ENCODE measurements at regions of chr6 and their contacts with region 1.

Region 1: GRCh38 chr6:13487122-13488014 is at the start of gene GFOD1:
- DNase-seq: peak; percentile 50 to 93
- H3K4me3 ChIP-seq: peak within 1 kb of the TSS; percentile 90 to 94
- H3K27ac ChIP-seq: peak within 1 kb of the TSS; percentile 89 to 96
- H3K4me1 ChIP-seq: peaks cover 4% of the 10 kb centered on the region in 2 donors
- H3K27me3 ChIP-seq: no peaks in the 10 kb centered on the region
- CTCF ChIP-seq: peak in 1 of 3 experiments; percentile 9
- total RNA-seq, gene GFOD1: 28.7 TPM

Region 2: GRCh38 chr6:13328076-13328874 is 159.1 kb before region 1 on chr6 and contains the start of gene TBC1D7:
- intact Hi-C with region 1: loop called (anchors 1 kb)
- DNase-seq: peak; percentile 66 to 97
- H3K4me3 ChIP-seq: peak within 1 kb of the TSS; percentile 73 to 92
- H3K27ac ChIP-seq: peak within 1 kb of the TSS; percentile 84 to 96
- H3K4me1 ChIP-seq: peaks cover 2 to 3% of the 10 kb centered on the region in 2 donors
- H3K27me3 ChIP-seq: no peaks in the 10 kb centered on the region
- CTCF ChIP-seq: peak in 2 of 3 experiments; percentile 7 to 35
- total RNA-seq, gene TBC1D7: 79.5 TPM

Region 3: DNA sequence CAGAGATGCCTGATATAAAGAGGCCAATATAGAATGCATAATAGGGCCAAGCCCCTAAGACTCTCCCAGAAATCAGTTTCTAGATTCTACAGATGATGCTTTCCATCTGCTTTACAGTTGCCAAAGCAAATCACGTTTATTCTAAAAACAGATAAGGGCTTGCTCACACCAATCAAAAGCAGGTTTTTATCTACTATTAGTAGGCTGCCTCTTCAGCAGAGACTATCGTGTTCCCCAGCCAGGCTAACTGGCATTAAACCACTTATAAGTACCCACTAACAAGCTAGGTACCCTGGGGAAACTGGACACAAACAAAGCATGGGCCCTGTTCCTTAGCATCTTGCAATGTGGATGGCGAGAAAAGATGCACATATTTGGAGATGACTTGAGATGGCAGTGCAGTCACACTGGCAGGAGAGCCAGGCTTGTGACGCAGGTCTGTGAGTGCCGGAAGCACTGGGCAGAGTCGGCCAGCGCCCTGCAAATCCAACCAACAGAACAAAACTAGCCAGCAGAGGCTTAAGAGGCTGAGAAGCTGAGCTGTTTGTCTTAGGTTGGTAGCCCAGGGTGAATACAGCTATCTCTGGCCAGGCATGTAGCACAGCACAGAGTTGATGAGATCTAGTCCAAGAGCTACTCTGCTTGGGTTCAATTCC is 73.3 kb before region 1 on chr6:
- intact Hi-C with region 1: loop called (anchors 2 kb)
- DNase-seq: peak; percentile 25 to 91
- H3K4me3 ChIP-seq: no peak overlapping the region
- H3K27ac ChIP-seq: peak overlapping the region; percentile 88 to 94
- H3K4me1 ChIP-seq: peaks cover 5 to 35% of the 10 kb centered on the region in 2 donors
- H3K27me3 ChIP-seq: no peaks in the 10 kb centered on the region
- CTCF ChIP-seq: no peak

Region 4: DNA sequence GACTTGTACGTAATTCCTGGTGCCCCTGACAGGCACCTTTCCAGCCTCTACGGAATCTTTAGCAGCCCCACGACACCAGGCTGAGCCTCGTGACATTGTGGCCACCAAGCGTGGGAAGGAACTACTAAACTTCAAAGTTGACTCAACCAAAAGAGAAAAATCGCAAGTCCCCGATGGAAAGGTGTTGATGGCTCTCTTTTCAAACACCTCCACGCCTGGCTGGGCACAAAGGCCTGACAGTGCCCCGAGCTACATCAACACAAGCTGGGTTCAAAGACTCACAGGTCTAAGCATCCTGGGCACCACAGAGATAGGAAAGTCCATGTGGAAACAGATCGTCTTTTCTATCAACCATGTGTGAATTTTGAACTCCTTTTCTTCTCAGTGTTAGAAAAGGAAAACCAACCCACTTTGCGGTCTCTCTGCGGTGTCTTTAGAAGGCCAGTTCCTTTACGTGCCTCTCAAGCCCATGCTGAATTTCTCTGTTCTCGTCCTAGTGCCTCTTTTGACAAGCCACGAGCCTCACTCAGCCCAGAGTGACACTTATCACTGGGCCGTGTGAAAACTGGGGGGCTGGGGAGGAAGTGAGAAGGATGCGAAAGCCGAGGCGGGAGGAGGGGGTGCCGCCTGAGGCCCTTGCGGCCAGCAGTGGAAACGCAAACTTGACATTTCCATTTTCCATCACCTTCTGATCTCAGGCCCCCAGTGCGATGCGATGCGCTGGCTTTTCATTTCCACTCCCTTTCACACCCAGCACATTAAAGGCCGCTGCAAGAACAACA is 59.4 kb before region 1 on chr6:
- intact Hi-C with region 1: loop called (anchors 5 kb)
- DNase-seq: peak in 1 of 2 donors; percentile 63
- H3K4me3 ChIP-seq: no peak overlapping the region
- H3K27ac ChIP-seq: no peak overlapping the region
- H3K4me1 ChIP-seq: peaks cover 7 to 18% of the 10 kb centered on the region in 2 donors
- H3K27me3 ChIP-seq: no peaks in the 10 kb centered on the region
- CTCF ChIP-seq: no peak

Region 5: GRCh38 chr6:13466304-13467215 is 20.8 kb before region 1 on chr6:
- intact Hi-C with region 1: no loop called
- DNase-seq: no peak
- H3K4me3 ChIP-seq: no peak overlapping the region
- H3K27ac ChIP-seq: no peak overlapping the region
- H3K4me1 ChIP-seq: no peaks in the 10 kb centered on the region
- H3K27me3 ChIP-seq: no peaks in the 10 kb centered on the region
- CTCF ChIP-seq: no peak

Region 6: GRCh38 chr6:13508711-13509705 is 21.6 kb after region 1 on chr6:
- intact Hi-C with region 1: loop called (anchors 2 kb)
- DNase-seq: peak in 1 of 2 donors; percentile 56
- H3K4me3 ChIP-seq: no peak overlapping the region
- H3K27ac ChIP-seq: peak overlapping the region; percentile 1 to 67
- H3K4me1 ChIP-seq: peaks cover 0 to 10% of the 10 kb centered on the region in 2 donors
- H3K27me3 ChIP-seq: no peaks in the 10 kb centered on the region
- CTCF ChIP-seq: no peak